ENCODE measurements at regions of chr5 and their contacts with region 1.

Region 1: DNA sequence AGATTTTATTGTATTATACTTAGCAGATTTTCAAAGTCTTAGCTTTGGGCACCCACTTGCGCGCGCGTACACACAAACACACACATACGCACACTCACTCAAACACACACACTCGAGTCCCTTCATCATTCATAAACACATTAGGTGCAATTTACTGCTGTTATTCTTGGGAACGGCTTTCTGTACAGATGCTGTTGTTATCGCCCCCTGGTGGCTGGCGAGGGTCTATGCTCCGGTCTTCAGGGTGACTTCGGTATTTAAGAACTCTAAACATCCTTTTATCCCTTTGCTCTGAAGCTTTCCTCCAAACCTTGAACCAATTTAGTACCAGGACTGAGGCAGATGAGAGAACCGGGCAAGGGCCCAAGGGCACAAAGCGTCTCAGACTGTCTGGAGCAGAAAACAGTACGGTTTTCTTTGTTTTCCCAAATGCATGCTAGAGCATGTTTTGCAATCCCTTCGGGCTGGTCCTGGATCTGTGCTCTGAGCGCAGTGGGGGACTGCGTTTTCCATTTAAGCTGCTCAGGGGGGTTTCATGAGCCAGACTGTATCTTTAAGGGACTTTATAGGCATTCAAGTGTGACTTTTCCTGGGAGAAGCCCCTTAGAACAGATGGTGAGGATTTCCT is 1.7 kb upstream of the SLIT3 start:
- DNase-seq: peak; percentile 63
- H3K4me3 ChIP-seq: no peak overlapping the region
- H3K27ac ChIP-seq: no peak overlapping the region
- H3K4me1 ChIP-seq: no peaks in the 10 kb centered on the region
- H3K27me3 ChIP-seq: no peaks in the 10 kb centered on the region
- CTCF ChIP-seq: peak; percentile 69 to 92 (median 78)
- POLR2A ChIP-seq: no peak

Region 2: GRCh38 chr5:168679515-168679920 is 623.1 kb before region 1 on chr5:
- intact Hi-C with region 1: loop called (anchors 5 kb)
- DNase-seq: peak; percentile 72
- H3K4me3 ChIP-seq: no peak overlapping the region
- H3K27ac ChIP-seq: no peak overlapping the region
- H3K4me1 ChIP-seq: no peaks in the 10 kb centered on the region
- H3K27me3 ChIP-seq: no peaks in the 10 kb centered on the region
- CTCF ChIP-seq: peak; percentile 68 to 91 (median 80)
- POLR2A ChIP-seq: no peak

Region 3: GRCh38 chr5:168987543-168988300 is 314.9 kb before region 1 on chr5:
- intact Hi-C with region 1: loop called (anchors 5 kb)
- DNase-seq: peak; percentile 76
- H3K4me3 ChIP-seq: no peak overlapping the region
- H3K27ac ChIP-seq: no peak overlapping the region
- H3K4me1 ChIP-seq: no peaks in the 10 kb centered on the region
- H3K27me3 ChIP-seq: no peaks in the 10 kb centered on the region
- CTCF ChIP-seq: peak; percentile 83 to 95 (median 88)
- POLR2A ChIP-seq: no peak

Region 4: GRCh38 chr5:169003721-169004541 is 298.7 kb before region 1 on chr5:
- intact Hi-C with region 1: loop called (anchors 5 kb)
- DNase-seq: no peak
- H3K4me3 ChIP-seq: no peak overlapping the region
- H3K27ac ChIP-seq: no peak overlapping the region
- H3K4me1 ChIP-seq: no peaks in the 10 kb centered on the region
- H3K27me3 ChIP-seq: no peaks in the 10 kb centered on the region
- CTCF ChIP-seq: peak in 2 of 4 experiments; percentile 19 to 20
- POLR2A ChIP-seq: no peak

Region 5: DNA sequence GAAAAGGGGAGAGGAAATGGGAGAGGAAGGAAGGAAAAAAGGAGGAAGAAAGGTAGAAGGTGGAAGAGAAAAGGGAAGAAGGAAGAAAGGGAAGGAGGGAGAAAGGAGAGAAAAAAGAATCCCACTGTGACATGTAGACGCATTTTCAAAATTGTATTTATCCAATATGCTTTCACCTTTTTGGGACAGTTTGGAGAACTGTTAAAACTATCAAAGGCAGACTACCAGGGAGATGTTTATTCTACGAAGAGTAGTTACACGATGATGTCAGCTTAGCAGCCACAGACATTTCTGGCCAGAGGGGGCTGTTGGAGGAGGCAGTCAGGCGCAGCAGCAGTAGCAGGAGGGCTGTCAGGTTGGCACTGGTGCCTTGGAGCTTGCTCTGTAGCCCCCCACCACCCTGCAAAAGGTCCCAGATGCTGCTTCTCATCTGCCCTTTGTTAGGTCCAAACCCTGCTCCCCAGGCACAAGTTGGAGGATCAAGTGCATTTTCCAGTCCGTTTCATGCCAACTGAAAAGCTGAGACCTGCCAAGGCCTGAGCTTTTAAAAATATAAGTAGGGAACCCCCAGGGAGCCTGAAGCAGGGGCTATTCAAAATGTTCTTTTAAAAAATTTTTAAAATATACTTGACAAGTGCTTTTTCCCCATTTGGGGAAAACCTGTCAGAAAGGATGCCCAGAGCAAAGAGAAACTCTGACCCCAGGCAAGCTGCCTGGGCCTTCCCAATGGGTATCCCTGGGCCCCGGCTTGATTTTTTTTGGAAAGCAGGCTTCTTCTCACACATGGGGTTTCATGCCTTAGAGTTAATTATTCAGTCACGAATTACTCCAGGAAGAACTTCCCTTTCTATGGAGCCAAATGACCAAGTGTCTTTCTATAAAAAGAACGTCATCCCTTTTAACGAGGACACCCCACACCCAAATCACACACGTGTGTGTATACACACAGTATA is 205.0 kb before region 1 on chr5:
- intact Hi-C with region 1: loop called (anchors 2 kb)
- DNase-seq: no peak
- H3K4me3 ChIP-seq: no peak overlapping the region
- H3K27ac ChIP-seq: no peak overlapping the region
- H3K4me1 ChIP-seq: no peaks in the 10 kb centered on the region
- H3K27me3 ChIP-seq: no peaks in the 10 kb centered on the region
- CTCF ChIP-seq: no peak
- POLR2A ChIP-seq: no peak

Region 6: DNA sequence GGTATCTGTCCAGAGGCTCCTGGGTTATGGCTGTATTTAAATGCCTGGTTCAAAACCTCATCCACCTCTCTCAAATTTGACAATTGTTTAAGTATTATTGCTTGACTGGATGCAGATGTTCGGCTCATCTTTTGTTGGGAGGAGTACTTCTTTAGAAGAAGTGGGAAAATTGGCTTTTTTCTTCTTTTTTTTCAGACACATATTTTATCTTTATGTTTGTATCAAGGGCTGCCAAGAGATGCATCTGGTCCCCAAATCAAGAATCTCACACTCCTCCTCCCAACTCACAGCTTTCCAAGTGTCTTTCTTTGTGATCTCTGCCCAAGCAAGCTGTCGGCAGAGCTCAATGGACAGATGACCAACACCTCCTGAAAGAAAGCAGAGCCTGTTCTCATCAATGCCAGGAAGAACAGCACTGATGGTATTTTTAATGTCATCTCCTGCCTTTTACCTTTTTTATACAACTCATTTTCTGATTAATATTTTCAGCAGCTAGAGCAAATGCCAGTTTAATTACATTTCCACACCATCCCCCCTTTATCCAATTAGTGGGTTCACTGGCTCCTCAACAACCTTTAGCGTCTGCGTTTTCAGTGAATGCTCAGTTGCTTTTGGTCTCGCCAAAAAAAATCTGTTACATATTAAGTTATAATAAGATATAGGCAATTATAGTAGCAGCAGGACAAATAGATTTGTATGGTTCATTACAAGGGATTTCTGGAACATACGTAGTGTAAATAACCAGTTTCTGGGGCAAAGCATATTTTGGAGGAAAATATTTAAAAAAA is 108.6 kb after region 1 on chr5:
- intact Hi-C with region 1: no loop called
- DNase-seq: no peak
- H3K4me3 ChIP-seq: no peak overlapping the region
- H3K27ac ChIP-seq: no peak overlapping the region
- H3K4me1 ChIP-seq: no peaks in the 10 kb centered on the region
- H3K27me3 ChIP-seq: no peaks in the 10 kb centered on the region
- CTCF ChIP-seq: no peak
- POLR2A ChIP-seq: no peak

Region 7: DNA sequence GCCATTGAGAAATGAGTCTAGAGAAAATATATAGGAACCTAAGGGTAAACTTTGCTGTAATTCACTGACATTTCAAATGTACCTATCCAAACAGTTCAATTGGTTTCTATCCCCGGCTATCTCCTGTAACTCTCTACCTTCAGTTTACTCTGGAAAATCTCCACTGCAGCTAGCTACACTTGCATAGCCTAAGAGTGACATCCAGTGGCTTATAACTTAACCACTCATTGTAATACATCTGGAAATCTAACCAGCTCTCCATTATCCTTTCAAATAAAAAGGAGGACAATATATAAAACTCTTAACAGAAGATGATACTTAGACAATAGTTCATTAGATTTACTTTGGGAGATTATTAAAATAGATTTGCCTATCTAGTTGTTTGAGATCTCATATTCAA is 245.7 kb after region 1 on chr5:
- intact Hi-C with region 1: loop called (anchors 10 kb)
- DNase-seq: peak; percentile 5
- H3K4me3 ChIP-seq: no peak overlapping the region
- H3K27ac ChIP-seq: no peak overlapping the region
- H3K4me1 ChIP-seq: no peaks in the 10 kb centered on the region
- H3K27me3 ChIP-seq: no peaks in the 10 kb centered on the region
- CTCF ChIP-seq: peak in 3 of 4 experiments; percentile 26 to 60 (median 36)
- POLR2A ChIP-seq: no peak

Region 8: GRCh38 chr5:169583424-169584204 is 281.0 kb after region 1 on chr5 and contains the start of gene SPDL1:
- intact Hi-C with region 1: no loop called
- DNase-seq: peak; percentile 95
- H3K4me3 ChIP-seq: peak within 1 kb of the TSS; percentile 56 to 81
- H3K27ac ChIP-seq: peak within 1 kb of the TSS; percentile 50 to 67
- H3K4me1 ChIP-seq: no peaks in the 10 kb centered on the region
- H3K27me3 ChIP-seq: no peaks in the 10 kb centered on the region
- CTCF ChIP-seq: peak in 2 of 4 experiments; percentile 2 to 12
- POLR2A ChIP-seq: peak; percentile 75
- total RNA-seq, gene SPDL1: 9.0 to 12.6 TPM

Measured in prostate gland (tissue), 2 donors.